ENCODE measurements at regions of chr2 and their contacts with region 1.

Region 1: GRCh38 chr2:15577071-15577735 is 14.5 kb upstream of the DDX1 start:
- DNase-seq: peak; percentile 94
- H3K4me3 Mint-ChIP-seq: no peak overlapping the region
- H3K27ac Mint-ChIP-seq: no peak overlapping the region
- H3K4me1 Mint-ChIP-seq: no peaks in the 10 kb centered on the region
- H3K27me3 Mint-ChIP-seq: no peaks in the 10 kb centered on the region

Region 2: DNA sequence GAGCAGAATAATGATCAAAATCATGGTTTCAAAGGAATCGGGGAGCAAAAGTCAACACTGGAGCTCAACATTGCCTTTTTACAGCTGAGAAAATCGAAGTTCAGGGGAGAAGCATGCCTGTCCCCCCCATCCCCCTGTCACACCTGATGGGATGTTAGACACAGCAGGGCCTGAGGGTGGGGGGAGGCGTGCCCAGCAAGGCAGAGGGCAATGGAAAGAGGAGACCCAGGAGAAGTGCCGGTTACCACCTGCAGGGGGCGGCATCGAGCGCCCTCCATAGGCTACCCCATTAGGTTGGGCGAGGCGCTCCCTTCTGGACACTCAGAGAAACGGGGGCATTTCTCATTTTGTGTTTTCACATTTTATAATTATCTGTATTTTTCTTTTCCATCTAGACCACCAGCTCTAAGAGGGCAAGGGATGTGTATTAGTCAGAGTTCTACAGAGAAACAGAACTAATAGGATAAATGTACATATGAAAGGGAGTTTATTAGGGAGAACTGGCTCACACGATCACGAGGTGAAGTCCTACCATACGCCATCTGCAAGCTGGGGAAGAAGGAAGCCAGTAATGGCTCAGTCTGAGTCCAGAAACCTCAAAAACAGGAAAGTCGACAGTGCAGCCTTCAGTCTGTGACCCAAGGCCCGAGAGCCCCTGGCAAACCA is 673.4 kb before region 1 on chr2:
- CTCF ChIA-PET with region 1: interaction called, 39 read pairs
- DNase-seq: peak; percentile 75
- H3K4me3 Mint-ChIP-seq: no peak overlapping the region
- H3K27ac Mint-ChIP-seq: no peak overlapping the region
- H3K4me1 Mint-ChIP-seq: no peaks in the 10 kb centered on the region
- H3K27me3 Mint-ChIP-seq: peaks cover 4% of the 10 kb centered on the region

Region 3: DNA sequence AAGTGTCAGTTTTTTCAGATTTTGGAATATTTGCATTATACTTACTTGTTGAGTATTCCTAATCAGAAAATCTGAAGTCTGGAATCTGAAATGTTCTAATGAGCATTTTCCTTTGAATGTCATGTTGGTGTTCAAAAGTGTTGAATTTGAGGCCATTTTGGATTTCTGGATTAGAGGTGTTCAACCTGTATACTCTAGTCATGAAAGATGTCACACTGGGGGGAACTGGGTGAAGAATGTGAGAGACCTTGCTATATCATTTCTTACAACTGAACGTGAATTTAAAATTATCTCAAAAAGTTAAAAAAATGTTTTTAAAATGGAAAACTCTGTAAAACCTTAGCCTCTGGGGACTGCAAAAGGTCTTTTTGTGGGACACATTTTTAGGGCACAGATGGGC is 400.6 kb before region 1 on chr2:
- CTCF ChIA-PET with region 1: no interaction called
- DNase-seq: no peak
- H3K4me3 Mint-ChIP-seq: no peak overlapping the region
- H3K27ac Mint-ChIP-seq: peak overlapping the region; percentile 2
- H3K4me1 Mint-ChIP-seq: peaks cover 45% of the 10 kb centered on the region
- H3K27me3 Mint-ChIP-seq: no peaks in the 10 kb centered on the region

Region 4: DNA sequence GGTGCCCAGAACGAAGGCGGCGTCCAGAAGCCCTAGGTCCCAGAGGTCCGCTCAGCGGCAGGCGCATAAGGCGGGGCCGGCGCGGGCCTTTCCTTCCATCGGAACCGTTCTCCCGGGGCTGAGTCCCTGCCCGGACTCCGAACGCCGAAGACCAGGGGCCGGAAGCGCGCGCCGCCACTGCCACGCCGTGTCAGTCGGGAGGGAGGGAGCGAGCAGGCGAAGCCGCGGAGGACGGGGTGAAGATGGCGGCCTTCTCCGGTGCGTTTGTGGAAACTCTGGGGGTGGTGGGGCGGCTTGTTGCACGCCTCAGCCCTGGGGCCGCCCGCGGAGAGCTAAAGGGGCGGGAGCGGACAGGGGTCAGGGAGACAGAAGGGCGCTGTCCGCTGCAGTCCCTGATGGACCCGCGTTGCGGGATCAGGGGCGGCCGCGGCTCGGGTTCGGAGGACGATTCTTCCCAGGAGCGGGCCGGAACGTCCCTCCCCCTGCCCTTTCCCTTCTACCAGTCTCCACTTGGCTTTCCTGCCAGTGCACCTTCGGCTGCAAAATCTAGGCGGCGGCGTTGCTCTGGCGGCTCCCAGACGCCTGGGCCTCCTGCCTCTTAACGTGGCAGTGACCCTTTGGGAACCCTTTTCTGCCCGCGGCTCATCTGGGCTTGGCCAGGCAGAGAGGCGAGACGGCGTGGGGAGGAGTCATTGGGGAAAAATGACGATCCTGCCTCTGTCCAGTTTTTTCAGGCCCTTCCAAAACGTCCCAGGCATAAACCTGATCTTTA is 14.7 kb after region 1 on chr2 and contains the start of gene DDX1:
- CTCF ChIA-PET with region 1: interaction called, 26 read pairs
- DNase-seq: peak; percentile 86
- H3K4me3 Mint-ChIP-seq: peak within 1 kb of the TSS; percentile 92
- H3K27ac Mint-ChIP-seq: peak within 1 kb of the TSS; percentile 91
- H3K4me1 Mint-ChIP-seq: peaks cover 30% of the 10 kb centered on the region
- H3K27me3 Mint-ChIP-seq: no peaks in the 10 kb centered on the region